ENCODE measurements at regions of chr10 and their contacts with region 1.

Region 1: DNA sequence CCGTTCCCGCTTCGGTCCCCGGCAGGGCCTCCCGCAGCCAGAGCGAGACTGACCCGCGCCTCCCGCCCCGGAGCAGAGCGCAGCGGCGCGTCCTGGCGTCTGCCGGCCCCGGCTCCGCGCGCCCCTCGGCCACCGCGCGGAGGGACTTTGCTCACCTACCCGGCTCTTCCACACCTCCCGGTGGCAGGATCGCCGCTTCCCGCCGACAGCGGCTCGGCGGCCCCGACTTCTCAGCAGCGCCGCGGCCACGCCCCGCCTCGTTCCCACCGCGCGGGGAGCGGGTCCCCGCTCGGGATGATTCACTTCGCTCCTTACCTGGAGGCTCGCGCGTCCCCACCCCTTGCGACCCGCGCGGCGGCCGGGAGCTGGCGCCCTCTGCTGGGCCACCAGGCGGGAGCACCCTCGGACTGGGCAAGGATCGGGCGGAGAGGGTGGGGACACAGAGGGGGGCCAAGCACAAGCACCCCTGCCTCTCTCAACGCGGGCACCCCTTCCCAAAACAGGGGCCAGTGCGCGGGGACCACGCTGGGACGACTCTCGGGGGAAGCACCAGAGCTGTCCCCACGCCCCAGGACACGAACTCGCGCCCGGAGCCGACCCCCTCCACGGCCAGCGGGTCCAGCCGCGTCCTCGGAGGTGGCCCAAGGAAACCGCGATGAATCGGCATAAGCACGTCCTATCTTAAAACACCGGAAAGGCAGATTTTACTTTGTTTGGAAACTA is 101.0 kb upstream of the SVIL start:
- DNase-seq: peak; percentile 67
- ATAC-seq: peak; percentile 77
- H3K4me3 ChIP-seq: peak overlapping the region; percentile 81
- H3K27ac ChIP-seq: peak overlapping the region; percentile 90
- H3K4me1 ChIP-seq: peaks cover 5% of the 10 kb centered on the region
- H3K27me3 ChIP-seq: no peaks in the 10 kb centered on the region
- CTCF ChIP-seq: peak; percentile 81
- POLR2A ChIP-seq: no peak; the same call in 1 of the 2 replicates
- RAD21 ChIP-seq: peak; percentile 71

Region 2: DNA sequence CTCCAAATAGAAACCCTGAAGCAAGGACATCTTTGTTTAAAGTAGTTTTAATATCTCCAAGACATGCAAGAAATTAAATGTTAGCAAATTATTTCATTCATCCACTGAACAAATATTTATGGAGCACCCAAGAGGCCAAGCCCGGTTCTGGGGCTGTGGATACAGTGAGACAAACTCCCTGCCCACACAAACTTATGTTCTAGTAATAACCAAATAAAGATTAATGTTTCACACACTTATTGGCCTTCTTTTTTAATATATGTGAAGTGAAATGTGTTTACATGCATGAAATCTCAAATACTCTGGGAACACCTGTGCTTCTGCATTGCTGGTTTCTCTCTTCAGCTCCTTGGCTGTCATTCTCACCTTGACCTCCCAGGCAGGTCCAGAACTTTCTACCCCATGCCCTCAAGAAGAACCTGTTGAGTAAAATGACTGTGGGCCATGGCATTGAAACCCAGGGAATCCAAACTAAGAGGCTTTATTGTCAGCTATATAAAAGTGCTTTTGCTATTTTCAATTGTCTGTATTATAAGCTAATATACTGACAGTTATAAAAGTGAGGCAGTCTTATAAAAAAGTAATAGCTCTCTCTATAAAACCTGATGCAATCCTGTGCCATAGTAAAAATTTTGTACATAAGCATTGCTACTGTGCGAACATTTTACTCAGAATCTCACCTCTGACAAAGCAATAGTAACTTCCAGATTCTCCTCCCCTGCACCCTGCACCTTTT is 144.7 kb before region 1 on chr10:
- CTCF ChIA-PET with region 1: no interaction called
- POLR2A ChIA-PET with region 1: no interaction called
- dilution Hi-C with region 1: no loop called
- in situ Hi-C with region 1: no loop called
- intact Hi-C with region 1: loop called (anchors 5 kb)
- DNase-seq: no peak
- ATAC-seq: no peak
- H3K4me3 ChIP-seq: no peak overlapping the region
- H3K27ac ChIP-seq: no peak overlapping the region
- H3K4me1 ChIP-seq: peaks cover 27% of the 10 kb centered on the region
- H3K27me3 ChIP-seq: no peaks in the 10 kb centered on the region
- CTCF ChIP-seq: no peak
- POLR2A ChIP-seq: no peak
- RAD21 ChIP-seq: no peak

Region 3: GRCh38 chr10:29689001-29689400 is 46.8 kb before region 1 on chr10:
- CTCF ChIA-PET with region 1: no interaction called
- POLR2A ChIA-PET with region 1: no interaction called
- dilution Hi-C with region 1: no loop called
- in situ Hi-C with region 1: no loop called
- intact Hi-C with region 1: no loop called
- DNase-seq: peak; percentile 84
- ATAC-seq: peak; percentile 85
- H3K4me3 ChIP-seq: no peak overlapping the region
- H3K27ac ChIP-seq: peak overlapping the region; percentile 52; the same call in 1 of the 2 replicates
- H3K4me1 ChIP-seq: peaks cover 12% of the 10 kb centered on the region
- H3K27me3 ChIP-seq: no peaks in the 10 kb centered on the region
- CTCF ChIP-seq: no peak
- POLR2A ChIP-seq: no peak
- RAD21 ChIP-seq: no peak

Region 4: DNA sequence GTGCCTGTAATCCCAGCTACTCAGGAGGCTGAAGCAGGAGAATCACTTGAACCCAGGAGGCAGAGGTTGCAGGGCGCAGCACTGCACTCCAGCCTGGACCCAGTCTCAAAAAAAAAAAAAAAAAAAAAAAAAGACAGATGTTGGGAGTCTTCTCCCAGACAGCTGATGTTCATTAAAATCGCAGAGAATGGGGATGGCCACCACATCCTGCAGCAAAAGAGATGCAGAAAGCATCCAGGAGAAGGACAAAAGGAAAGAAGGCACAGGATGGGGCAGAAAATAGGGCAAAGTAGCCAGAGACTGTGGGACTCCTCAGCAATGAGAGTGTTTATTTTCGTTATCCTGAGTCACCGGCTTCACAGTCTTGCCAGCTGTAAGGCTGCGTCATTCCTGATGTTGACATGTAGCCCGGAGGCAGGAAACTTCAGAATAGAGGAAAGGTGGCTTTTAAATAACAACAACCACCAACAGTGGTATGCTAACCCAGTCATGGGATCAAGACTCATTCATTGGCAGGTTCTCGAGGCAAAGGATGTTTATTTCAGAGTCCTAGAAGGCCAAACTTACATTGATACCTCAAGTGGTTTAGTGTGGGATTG is 48.5 kb after region 1 on chr10:
- CTCF ChIA-PET with region 1: no interaction called
- POLR2A ChIA-PET with region 1: no interaction called
- dilution Hi-C with region 1: no loop called
- in situ Hi-C with region 1: no loop called
- intact Hi-C with region 1: loop called (anchors 2 kb)
- DNase-seq: peak; percentile 100
- ATAC-seq: peak; percentile 94
- H3K4me3 ChIP-seq: no peak overlapping the region
- H3K27ac ChIP-seq: peak overlapping the region; percentile 90
- H3K4me1 ChIP-seq: peaks cover 22% of the 10 kb centered on the region
- H3K27me3 ChIP-seq: no peaks in the 10 kb centered on the region
- CTCF ChIP-seq: no peak
- POLR2A ChIP-seq: peak; percentile 37; the same call in 1 of the 2 replicates
- RAD21 ChIP-seq: peak; percentile 28

Region 5: GRCh38 chr10:29857843-29858701 is 122.3 kb after region 1 on chr10:
- CTCF ChIA-PET with region 1: interaction called, 3 read pairs
- POLR2A ChIA-PET with region 1: no interaction called
- dilution Hi-C with region 1: no loop called
- in situ Hi-C with region 1: no loop called
- intact Hi-C with region 1: loop called (anchors 1 kb)
- DNase-seq: peak; percentile 82
- ATAC-seq: peak; percentile 91
- H3K4me3 ChIP-seq: no peak overlapping the region
- H3K27ac ChIP-seq: peak overlapping the region; percentile 23; the same call in 1 of the 2 replicates
- H3K4me1 ChIP-seq: peaks cover 9% of the 10 kb centered on the region
- H3K27me3 ChIP-seq: no peaks in the 10 kb centered on the region
- CTCF ChIP-seq: peak; percentile 81
- POLR2A ChIP-seq: 0 out of 2 replicates have a peak, but pooled peaks have one; percentile 24
- RAD21 ChIP-seq: peak; percentile 81